B cell (primary cell): ENCODE measurements at regions of chr2 and their contacts with region 1.

Region 1: GRCh38 chr2:64214281-64215115 is 70.3 kb upstream of the PELI1 start:
- DNase-seq: peak; percentile 83
- ATAC-seq: peak; percentile 75
- H3K4me3 ChIP-seq: peak overlapping the region in 4 of 5 experiments; percentile 7 to 48 (median 26)
- H3K4me3 Mint-ChIP-seq: peak overlapping the region; percentile 80
- H3K27ac ChIP-seq: peak overlapping the region; percentile 89 to 98
- H3K27ac Mint-ChIP-seq: peak overlapping the region; percentile 99
- H3K4me1 ChIP-seq: peaks cover 59 to 69% of the 10 kb centered on the region in 2 donors
- H3K4me1 Mint-ChIP-seq: peaks cover 62% of the 10 kb centered on the region
- H3K27me3 ChIP-seq: no peaks in the 10 kb centered on the region
- H3K27me3 Mint-ChIP-seq: no peaks in the 10 kb centered on the region
- CTCF ChIP-seq: no peak

Region 2: GRCh38 chr2:64203858-64204632 is 10.5 kb before region 1 on chr2:
- CTCF ChIA-PET with region 1: interaction called, 5 read pairs
- POLR2A ChIA-PET with region 1: interaction called, 8 read pairs
- intact Hi-C with region 1: loop called (anchors 1 kb)
- DNase-seq: peak; percentile 87
- ATAC-seq: peak; percentile 67
- H3K4me3 ChIP-seq: peak overlapping the region in 4 of 5 experiments; percentile 0 to 40 (median 36)
- H3K4me3 Mint-ChIP-seq: peak overlapping the region; percentile 84
- H3K27ac ChIP-seq: peak overlapping the region; percentile 59 to 70
- H3K27ac Mint-ChIP-seq: peak overlapping the region; percentile 89
- H3K4me1 ChIP-seq: peaks cover 44 to 46% of the 10 kb centered on the region in 2 donors
- H3K4me1 Mint-ChIP-seq: peaks cover 49% of the 10 kb centered on the region
- H3K27me3 ChIP-seq: no peaks in the 10 kb centered on the region
- H3K27me3 Mint-ChIP-seq: no peaks in the 10 kb centered on the region
- CTCF ChIP-seq: no peak

Region 3: DNA sequence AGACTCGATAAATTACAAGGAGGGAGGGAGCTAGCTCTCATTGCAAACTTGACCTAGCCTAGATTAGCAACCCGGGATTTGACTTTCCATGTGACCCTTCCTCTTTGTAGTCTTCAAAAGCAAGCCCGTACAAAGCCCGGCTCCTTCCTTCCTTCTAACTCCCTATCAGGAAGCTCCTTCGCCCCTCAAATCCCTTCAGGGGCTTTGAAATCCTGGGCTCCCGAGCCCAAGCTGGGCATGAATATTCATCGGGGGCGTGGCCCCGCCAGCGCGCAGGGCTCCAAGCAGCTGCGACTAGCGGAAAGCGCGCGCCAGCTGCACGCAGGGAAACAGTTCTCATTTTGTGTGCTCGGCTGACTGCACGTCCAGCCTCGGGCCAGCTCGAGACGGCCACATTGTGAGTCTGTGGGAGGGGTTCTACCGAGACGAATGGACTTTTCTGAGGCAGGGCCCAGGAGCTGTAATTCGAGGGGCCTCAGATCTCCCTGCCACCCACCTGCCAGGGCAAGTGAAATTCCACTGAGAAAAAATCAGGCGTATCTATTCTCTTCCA is 13.7 kb after region 1 on chr2:
- CTCF ChIA-PET with region 1: interaction called, 8 read pairs
- POLR2A ChIA-PET with region 1: interaction called, 9 read pairs
- intact Hi-C with region 1: loop called (anchors 1 kb)
- DNase-seq: peak; percentile 75
- ATAC-seq: peak; percentile 98
- H3K4me3 ChIP-seq: peak overlapping the region; percentile 46 to 81 (median 72)
- H3K4me3 Mint-ChIP-seq: peak overlapping the region; percentile 98
- H3K27ac ChIP-seq: peak overlapping the region; percentile 60 to 63
- H3K27ac Mint-ChIP-seq: peak overlapping the region; percentile 98
- H3K4me1 ChIP-seq: peaks cover 25 to 28% of the 10 kb centered on the region in 2 donors
- H3K4me1 Mint-ChIP-seq: peaks cover 32% of the 10 kb centered on the region
- H3K27me3 ChIP-seq: no peaks in the 10 kb centered on the region
- H3K27me3 Mint-ChIP-seq: no peaks in the 10 kb centered on the region
- CTCF ChIP-seq: no peak